Activated B cell treated with CpG ODN at 0.5 μM for 24 hours (primary cell): ENCODE measurements at regions of chr10 and their contacts with region 1.

Region 1: GRCh38 chr10:132571650-132572535 is 34.3 kb downstream of the INPP5A start:
- DNase-seq: peak; percentile 78
- ATAC-seq: peak; percentile 77
- H3K4me3 Mint-ChIP-seq: no peak overlapping the region
- H3K27ac Mint-ChIP-seq: no peak overlapping the region
- H3K4me1 Mint-ChIP-seq: peaks cover 6% of the 10 kb centered on the region
- H3K27me3 Mint-ChIP-seq: no peaks in the 10 kb centered on the region
- CTCF ChIP-seq: no peak

Region 2: GRCh38 chr10:132396495-132397035 is 175.3 kb before region 1 on chr10:
- CTCF ChIA-PET with region 1: no interaction called
- POLR2A ChIA-PET with region 1: interaction called, 3 read pairs
- intact Hi-C with region 1: loop called (anchors 2 kb)
- DNase-seq: peak; percentile 74
- ATAC-seq: peak; percentile 71
- H3K4me3 Mint-ChIP-seq: no peak overlapping the region
- H3K27ac Mint-ChIP-seq: no peak overlapping the region
- H3K4me1 Mint-ChIP-seq: peaks cover 59% of the 10 kb centered on the region
- H3K27me3 Mint-ChIP-seq: no peaks in the 10 kb centered on the region
- CTCF ChIP-seq: no peak

Region 3: DNA sequence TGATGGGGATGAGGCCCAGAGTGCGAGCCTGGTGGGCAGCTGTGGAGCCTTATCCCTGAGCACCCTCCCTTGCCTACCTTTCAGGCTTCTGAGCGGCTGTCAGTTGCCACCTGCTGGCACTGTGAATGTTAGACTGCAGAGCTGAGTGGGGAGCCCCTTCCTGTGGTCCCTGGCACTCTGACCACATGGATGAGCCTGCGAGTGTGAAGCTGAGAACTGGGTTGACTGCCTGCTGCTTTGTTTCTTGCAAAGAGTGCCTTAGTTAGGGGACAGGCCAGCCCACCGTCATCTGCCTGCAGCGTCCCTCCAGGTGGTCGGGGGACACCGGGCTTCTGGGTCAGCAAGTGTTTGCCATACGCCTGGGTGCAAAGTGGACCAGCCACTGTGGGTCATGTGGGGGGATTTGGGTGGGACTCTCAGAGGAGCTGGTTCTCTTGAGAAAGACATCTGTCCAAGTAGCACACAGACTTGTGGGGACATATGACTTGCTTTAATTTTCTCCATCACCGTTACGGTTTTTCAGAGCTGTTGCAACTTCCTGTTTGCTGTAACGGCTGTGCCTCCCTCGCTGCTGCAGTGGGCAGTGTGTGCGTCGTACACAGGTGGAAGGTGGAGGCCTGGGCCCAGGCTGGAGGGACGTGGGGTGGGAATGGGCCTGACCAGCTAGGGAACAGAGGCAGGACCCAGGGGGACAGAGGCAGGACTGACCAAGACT is 20.6 kb before region 1 on chr10:
- CTCF ChIA-PET with region 1: interaction called, 7 read pairs
- POLR2A ChIA-PET with region 1: interaction called, 37 read pairs
- intact Hi-C with region 1: loop called (anchors 1 kb)
- DNase-seq: no peak
- ATAC-seq: peak; percentile 32
- H3K4me3 Mint-ChIP-seq: peak overlapping the region; percentile 72
- H3K27ac Mint-ChIP-seq: peak overlapping the region; percentile 91
- H3K4me1 Mint-ChIP-seq: peaks cover 55% of the 10 kb centered on the region
- H3K27me3 Mint-ChIP-seq: no peaks in the 10 kb centered on the region
- CTCF ChIP-seq: no peak

Region 4: GRCh38 chr10:132588301-132589013 is 16.6 kb after region 1 on chr10:
- CTCF ChIA-PET with region 1: interaction called, 3 read pairs
- POLR2A ChIA-PET with region 1: interaction called, 35 read pairs
- intact Hi-C with region 1: loop called (anchors 1 kb)
- DNase-seq: peak; percentile 39
- ATAC-seq: peak; percentile 65
- H3K4me3 Mint-ChIP-seq: peak overlapping the region; percentile 77
- H3K27ac Mint-ChIP-seq: peak overlapping the region; percentile 78
- H3K4me1 Mint-ChIP-seq: peaks cover 75% of the 10 kb centered on the region
- H3K27me3 Mint-ChIP-seq: no peaks in the 10 kb centered on the region
- CTCF ChIP-seq: no peak

Region 5: DNA sequence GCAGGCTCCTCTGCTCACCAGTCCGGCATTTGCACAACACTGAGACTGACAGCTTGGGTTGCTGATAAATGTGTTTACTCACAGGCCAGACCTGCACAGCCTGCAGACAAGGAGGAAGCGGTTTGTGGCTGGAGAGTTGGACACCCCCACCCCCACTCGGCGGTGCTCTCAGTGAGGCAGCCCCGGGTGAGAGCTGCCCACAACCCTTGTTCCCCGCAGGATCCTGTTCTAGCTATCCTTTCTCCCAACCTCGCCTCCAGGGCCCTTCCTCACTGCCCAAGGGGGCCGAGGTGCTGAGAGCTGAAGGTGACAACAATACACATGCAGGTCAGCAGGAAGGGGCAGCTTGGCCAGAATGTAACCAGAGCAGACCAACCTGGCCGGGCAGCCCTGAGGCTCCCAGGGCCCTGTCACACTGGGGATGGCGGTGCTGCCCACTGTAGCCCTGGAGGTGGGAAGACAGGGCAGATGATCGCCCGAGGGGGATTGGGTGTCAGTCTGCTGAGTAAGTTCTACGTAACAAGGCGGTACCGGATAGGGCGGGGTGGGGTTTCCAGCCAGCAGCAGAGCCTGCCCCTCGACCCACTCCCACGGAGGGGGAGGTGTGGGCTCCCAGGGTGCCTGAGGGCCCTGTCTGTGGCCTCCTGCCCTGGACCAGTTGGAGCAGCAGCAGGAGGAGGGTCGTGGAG is 706.8 kb after region 1 on chr10:
- CTCF ChIA-PET with region 1: no interaction called
- POLR2A ChIA-PET with region 1: no interaction called
- intact Hi-C with region 1: loop called (anchors 5 kb)
- DNase-seq: peak; percentile 44
- ATAC-seq: peak; percentile 10
- H3K4me3 Mint-ChIP-seq: peak overlapping the region; percentile 76
- H3K27ac Mint-ChIP-seq: peak overlapping the region; percentile 80
- H3K4me1 Mint-ChIP-seq: peaks cover 38% of the 10 kb centered on the region
- H3K27me3 Mint-ChIP-seq: no peaks in the 10 kb centered on the region
- CTCF ChIP-seq: no peak